PC-3 (cell line): ENCODE measurements at regions of chr2 and their contacts with region 1.

Region 1: DNA sequence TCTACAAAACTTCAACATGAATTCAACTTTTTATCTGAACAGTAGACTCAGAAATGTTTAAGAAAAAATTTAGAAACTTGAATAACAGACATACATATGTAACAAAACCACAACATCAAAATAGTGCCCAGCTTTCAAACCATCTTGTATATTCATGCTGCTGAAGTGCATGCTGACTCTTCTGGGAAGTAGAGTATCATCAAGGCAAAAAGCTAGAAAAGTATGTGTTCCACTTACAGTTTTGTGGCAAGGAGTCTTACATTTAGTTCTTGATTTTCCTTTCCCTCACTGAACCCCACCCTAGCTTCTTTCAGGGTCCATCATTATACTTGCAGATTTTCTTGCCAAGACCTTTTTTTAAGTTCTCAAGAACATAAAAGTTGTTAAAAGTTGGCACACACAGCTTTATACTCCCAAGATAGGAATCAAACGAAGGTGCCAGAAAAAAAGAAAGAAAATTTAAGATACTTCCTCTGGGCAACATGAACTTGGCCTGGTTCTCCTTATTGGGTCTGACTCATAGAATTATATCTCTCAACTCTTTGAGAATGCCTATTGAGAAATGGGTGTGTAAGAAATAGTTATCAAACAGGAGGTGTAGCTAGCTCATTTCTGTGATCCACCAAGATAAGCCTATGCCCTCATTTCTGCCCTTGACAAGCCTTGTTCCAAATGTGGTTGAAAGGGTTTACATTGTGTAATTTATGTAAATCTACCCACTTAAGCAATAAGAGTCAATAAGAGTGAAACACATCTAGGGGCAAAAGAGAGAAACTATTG is 667.6 kb upstream of the ACVR2A start:
- DNase-seq: peak; percentile 75
- ATAC-seq: peak; percentile 65
- H3K4me3 ChIP-seq: no peak overlapping the region
- H3K27ac ChIP-seq: peak overlapping the region; percentile 70
- H3K4me1 ChIP-seq: peaks cover 38% of the 10 kb centered on the region
- H3K27me3 ChIP-seq: no peaks in the 10 kb centered on the region
- CTCF ChIP-seq: no peak

Region 2: GRCh38 chr2:146982393-146982846 is 194.8 kb before region 1 on chr2:
- CTCF ChIA-PET with region 1: no interaction called
- POLR2A ChIA-PET with region 1: no interaction called
- intact Hi-C with region 1: no loop called
- DNase-seq: no peak
- ATAC-seq: no peak
- H3K4me3 ChIP-seq: no peak overlapping the region
- H3K27ac ChIP-seq: no peak overlapping the region
- H3K4me1 ChIP-seq: peaks cover 23% of the 10 kb centered on the region
- H3K27me3 ChIP-seq: no peaks in the 10 kb centered on the region
- CTCF ChIP-seq: no peak

Region 3: GRCh38 chr2:147082850-147083522 is 94.3 kb before region 1 on chr2:
- CTCF ChIA-PET with region 1: no interaction called
- POLR2A ChIA-PET with region 1: no interaction called
- intact Hi-C with region 1: loop called (anchors 10 kb)
- DNase-seq: peak; percentile 87
- ATAC-seq: peak; percentile 67
- H3K4me3 ChIP-seq: no peak overlapping the region
- H3K27ac ChIP-seq: no peak overlapping the region
- H3K4me1 ChIP-seq: no peaks in the 10 kb centered on the region
- H3K27me3 ChIP-seq: no peaks in the 10 kb centered on the region
- CTCF ChIP-seq: peak; percentile 96

Region 4: DNA sequence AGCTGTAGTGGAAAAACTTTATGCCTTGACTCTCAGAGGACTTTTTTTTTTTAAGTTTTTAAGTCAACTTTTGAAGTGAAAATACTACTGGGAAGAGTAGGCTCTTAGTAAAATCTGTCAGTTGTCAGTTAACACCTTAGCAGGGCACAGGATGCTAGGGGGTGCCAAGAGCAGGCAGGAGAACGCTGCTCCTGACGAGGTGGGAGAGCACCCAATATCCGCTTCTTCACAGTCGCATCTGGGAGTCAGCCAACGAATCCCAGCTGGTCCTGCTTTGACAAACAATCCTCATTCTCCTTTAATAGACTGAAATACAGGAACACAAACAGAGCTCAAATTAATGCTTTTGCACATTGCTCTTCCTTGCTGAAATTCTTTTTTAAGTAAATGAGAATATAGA is 41.9 kb before region 1 on chr2:
- CTCF ChIA-PET with region 1: no interaction called
- POLR2A ChIA-PET with region 1: no interaction called
- intact Hi-C with region 1: loop called (anchors 1 kb)
- DNase-seq: no peak
- ATAC-seq: no peak
- H3K4me3 ChIP-seq: no peak overlapping the region
- H3K27ac ChIP-seq: no peak overlapping the region
- H3K4me1 ChIP-seq: peaks cover 27% of the 10 kb centered on the region
- H3K27me3 ChIP-seq: no peaks in the 10 kb centered on the region
- CTCF ChIP-seq: no peak

Region 5: DNA sequence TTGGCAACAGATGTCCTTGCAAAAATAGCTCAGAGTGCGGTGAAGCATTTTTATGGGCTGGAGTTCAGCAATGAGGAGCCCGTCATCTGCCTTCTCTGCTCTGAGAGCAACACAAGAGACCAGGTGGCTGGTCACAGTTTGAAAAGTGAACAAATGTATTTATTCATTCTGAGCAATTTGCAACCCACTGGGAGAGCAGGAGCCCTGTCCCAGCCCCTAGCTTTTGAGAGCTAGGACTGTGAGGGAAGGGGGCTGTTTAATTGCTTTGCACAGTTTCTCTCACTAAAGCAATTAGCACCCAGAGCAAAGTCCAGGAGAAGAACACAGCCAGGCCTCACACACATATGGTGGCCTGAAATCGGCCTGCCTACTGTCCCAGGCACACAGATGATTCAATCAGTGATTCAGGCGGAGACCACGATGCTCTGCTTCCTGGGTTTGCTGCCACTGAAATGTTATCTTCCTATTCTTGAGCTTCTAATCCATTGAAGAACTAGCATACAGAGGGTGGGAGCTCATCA is 21.4 kb after region 1 on chr2:
- CTCF ChIA-PET with region 1: no interaction called
- POLR2A ChIA-PET with region 1: no interaction called
- intact Hi-C with region 1: no loop called
- DNase-seq: no peak
- ATAC-seq: no peak
- H3K4me3 ChIP-seq: no peak overlapping the region
- H3K27ac ChIP-seq: no peak overlapping the region
- H3K4me1 ChIP-seq: peaks cover 7% of the 10 kb centered on the region
- H3K27me3 ChIP-seq: no peaks in the 10 kb centered on the region
- CTCF ChIP-seq: no peak